ENCODE measurements at regions of chr3 and their contacts with region 1.

Region 1: DNA sequence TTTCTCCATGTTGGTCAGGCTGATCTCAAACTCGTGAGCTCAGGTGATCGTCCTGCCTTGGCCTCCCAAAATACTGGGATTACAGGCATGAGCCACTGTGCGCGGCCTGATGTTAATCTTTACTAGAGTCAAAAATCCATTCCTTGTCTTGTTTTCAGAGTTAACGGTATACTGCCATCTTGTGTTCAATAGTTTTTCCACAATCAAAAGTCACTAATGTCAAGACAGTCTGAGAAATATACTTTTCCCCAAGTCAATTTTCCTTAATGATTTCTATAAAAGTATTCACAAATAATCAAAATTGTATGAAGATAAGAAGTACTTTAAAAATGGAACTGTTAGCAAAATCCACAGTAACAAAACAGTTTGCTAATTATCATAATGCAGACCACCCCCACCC is 8.5 kb downstream of the CRBN start:
- DNase-seq: peak; percentile 46 to 55 (median 50)
- H3K4me3 ChIP-seq: no peak overlapping the region
- H3K4me3 Mint-ChIP-seq: peak overlapping the region in 6 of 8 donors; percentile 35 to 95 (median 58)
- H3K27ac ChIP-seq: peak overlapping the region; percentile 72
- H3K27ac Mint-ChIP-seq: peak overlapping the region; percentile 86 to 98 (median 97)
- H3K4me1 ChIP-seq: peaks cover 81% of the 10 kb centered on the region
- H3K4me1 Mint-ChIP-seq: peaks cover 47 to 86% (median 64%) of the 10 kb centered on the region in 4 donors
- H3K27me3 ChIP-seq: no peaks in the 10 kb centered on the region
- H3K27me3 Mint-ChIP-seq: no peaks in the 10 kb centered on the region

Region 2: DNA sequence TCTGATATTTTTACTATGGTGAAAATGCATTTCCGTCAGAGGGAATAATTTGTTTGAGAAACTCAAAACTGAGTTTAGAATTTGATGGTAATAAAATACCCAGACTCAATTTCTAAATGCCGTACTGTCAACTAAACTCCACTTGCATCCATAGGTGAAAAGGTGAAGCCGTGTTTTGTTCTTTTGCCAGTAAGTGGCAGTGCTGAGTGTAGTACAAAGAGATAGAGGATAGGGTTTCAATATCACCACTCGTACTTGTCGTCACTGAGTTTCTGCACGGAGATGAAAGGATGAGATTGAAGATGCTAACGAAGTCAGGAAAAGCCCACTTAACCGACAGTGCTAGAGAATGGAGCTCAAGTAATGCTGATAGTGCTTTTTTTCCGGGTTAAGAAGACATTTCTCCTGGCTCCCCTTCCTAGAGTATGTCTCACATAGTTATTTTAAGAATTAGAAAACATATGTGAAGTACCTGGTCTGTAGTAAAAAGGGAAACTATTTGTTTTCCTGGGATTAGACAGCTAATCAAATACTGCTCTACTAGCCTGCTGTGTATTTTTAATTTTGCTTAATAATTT is 405.9 kb before region 1 on chr3:
- CTCF ChIA-PET with region 1: interaction called, 3 read pairs
- POLR2A ChIA-PET with region 1: no interaction called
- intact Hi-C with region 1: loop called (anchors 1 kb)
- DNase-seq: peak in 3 of 5 donors; percentile 12 to 20 (median 17)
- H3K4me3 ChIP-seq: no peak overlapping the region
- H3K4me3 Mint-ChIP-seq: peak overlapping the region in 2 of 8 donors; percentile 4 to 39
- H3K27ac ChIP-seq: no peak overlapping the region
- H3K27ac Mint-ChIP-seq: no peak overlapping the region
- H3K4me1 ChIP-seq: no peaks in the 10 kb centered on the region
- H3K4me1 Mint-ChIP-seq: peaks cover 0 to 4% (median 3%) of the 10 kb centered on the region in 4 donors
- H3K27me3 ChIP-seq: no peaks in the 10 kb centered on the region
- H3K27me3 Mint-ChIP-seq: peaks cover 3 to 4% of the 10 kb centered on the region in 2 donors

Region 3: DNA sequence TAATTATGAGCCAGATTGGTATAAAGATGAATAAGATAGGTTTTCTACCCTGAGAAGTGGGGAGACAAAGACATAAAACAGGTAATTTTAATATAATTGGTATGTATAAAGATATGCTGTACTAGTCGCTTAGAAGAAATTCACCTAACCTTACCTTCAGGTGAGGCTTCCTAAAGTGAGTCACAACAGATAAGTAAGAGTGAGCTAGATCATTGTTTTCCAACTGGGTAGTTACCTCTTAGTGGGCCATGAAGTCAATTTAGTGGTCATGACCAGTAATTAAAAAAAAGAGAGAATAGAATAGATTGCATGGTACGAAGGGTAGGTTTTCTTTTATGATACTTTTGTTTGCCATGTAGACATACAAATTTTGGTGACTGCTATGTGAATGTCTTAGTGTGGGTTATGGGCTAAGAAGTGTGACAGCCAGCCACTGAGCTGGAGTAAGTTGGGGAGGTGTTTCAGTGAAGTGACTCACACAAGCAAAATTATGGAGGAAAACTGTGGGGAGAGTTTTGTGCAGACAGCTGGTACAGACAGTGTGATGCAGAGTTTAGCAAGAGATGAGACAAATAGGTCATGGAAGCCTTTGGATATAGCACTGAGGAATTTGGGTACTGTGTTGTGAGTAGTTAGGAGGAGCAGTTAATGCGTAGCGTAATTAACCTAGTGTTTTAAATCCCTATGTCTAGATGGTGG is 36.1 kb before region 1 on chr3:
- CTCF ChIA-PET with region 1: interaction called, 14 read pairs
- POLR2A ChIA-PET with region 1: interaction called, 5 read pairs
- intact Hi-C with region 1: no loop called
- DNase-seq: no peak
- H3K4me3 ChIP-seq: no peak overlapping the region
- H3K4me3 Mint-ChIP-seq: peak overlapping the region in 4 of 8 donors; percentile 7 to 35 (median 18)
- H3K27ac ChIP-seq: no peak overlapping the region
- H3K27ac Mint-ChIP-seq: peak overlapping the region; percentile 56 to 87 (median 76)
- H3K4me1 ChIP-seq: peaks cover 41% of the 10 kb centered on the region
- H3K4me1 Mint-ChIP-seq: peaks cover 39 to 64% (median 51%) of the 10 kb centered on the region in 4 donors
- H3K27me3 ChIP-seq: no peaks in the 10 kb centered on the region
- H3K27me3 Mint-ChIP-seq: no peaks in the 10 kb centered on the region

Region 4: GRCh38 chr3:3154879-3155610 is 16.0 kb before region 1 on chr3:
- CTCF ChIA-PET with region 1: interaction called, 20 read pairs
- POLR2A ChIA-PET with region 1: interaction called, 15 read pairs
- intact Hi-C with region 1: no loop called
- DNase-seq: no peak
- H3K4me3 ChIP-seq: no peak overlapping the region
- H3K4me3 Mint-ChIP-seq: no peak overlapping the region
- H3K27ac ChIP-seq: peak overlapping the region; percentile 22
- H3K27ac Mint-ChIP-seq: peak overlapping the region in 6 of 7 donors; percentile 39 to 87 (median 76)
- H3K4me1 ChIP-seq: peaks cover 19% of the 10 kb centered on the region
- H3K4me1 Mint-ChIP-seq: peaks cover 33 to 66% (median 46%) of the 10 kb centered on the region in 4 donors
- H3K27me3 ChIP-seq: no peaks in the 10 kb centered on the region
- H3K27me3 Mint-ChIP-seq: no peaks in the 10 kb centered on the region

Region 5: GRCh38 chr3:3160826-3161225 is 10.2 kb before region 1 on chr3:
- CTCF ChIA-PET with region 1: interaction called, 7 read pairs
- POLR2A ChIA-PET with region 1: interaction called, 15 read pairs
- intact Hi-C with region 1: no loop called
- DNase-seq: no peak
- H3K4me3 ChIP-seq: no peak overlapping the region
- H3K4me3 Mint-ChIP-seq: peak overlapping the region in 1 of 8 donors; percentile 5
- H3K27ac ChIP-seq: no peak overlapping the region
- H3K27ac Mint-ChIP-seq: peak overlapping the region; percentile 11 to 86 (median 67)
- H3K4me1 ChIP-seq: peaks cover 34% of the 10 kb centered on the region
- H3K4me1 Mint-ChIP-seq: peaks cover 44 to 80% (median 63%) of the 10 kb centered on the region in 4 donors
- H3K27me3 ChIP-seq: no peaks in the 10 kb centered on the region
- H3K27me3 Mint-ChIP-seq: no peaks in the 10 kb centered on the region

Region 6: DNA sequence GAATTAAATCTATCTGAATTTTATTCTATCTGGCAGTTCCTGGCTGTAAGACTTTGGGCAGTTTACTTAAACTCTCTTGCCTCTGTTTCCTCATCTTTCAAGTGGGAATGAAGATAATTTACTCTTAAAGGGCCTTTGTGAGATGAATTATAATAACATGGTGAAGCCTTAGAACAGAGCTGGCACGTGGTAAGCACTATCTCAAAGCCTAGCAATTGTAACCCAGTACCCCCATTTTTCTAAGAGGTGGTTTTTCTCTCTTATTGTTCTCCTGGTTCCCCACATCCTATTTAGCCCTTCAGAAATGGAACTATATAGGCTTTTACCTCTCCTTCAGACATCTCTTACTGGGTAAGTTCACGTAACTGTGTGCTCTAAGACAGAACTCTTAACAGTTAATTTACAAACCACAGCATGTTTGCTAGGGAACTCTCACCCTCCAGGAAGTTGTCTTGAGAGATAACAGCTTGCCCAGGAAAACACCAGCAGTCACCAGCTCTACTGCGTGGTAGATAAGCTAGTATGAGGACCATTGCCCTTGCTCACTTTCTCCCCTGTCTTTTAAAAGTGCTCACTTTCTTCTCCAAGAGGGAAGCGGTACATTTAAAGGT is 20.8 kb after region 1 on chr3:
- CTCF ChIA-PET with region 1: interaction called, 61 read pairs
- POLR2A ChIA-PET with region 1: interaction called, 26 read pairs
- intact Hi-C with region 1: no loop called
- DNase-seq: peak; percentile 36 to 54 (median 50)
- H3K4me3 ChIP-seq: peak overlapping the region; percentile 18 to 44
- H3K4me3 Mint-ChIP-seq: peak overlapping the region; percentile 36 to 86 (median 78)
- H3K27ac ChIP-seq: peak overlapping the region; percentile 49
- H3K27ac Mint-ChIP-seq: peak overlapping the region; percentile 83 to 93 (median 89)
- H3K4me1 ChIP-seq: peaks cover 47% of the 10 kb centered on the region
- H3K4me1 Mint-ChIP-seq: peaks cover 43 to 75% (median 59%) of the 10 kb centered on the region in 4 donors
- H3K27me3 ChIP-seq: no peaks in the 10 kb centered on the region
- H3K27me3 Mint-ChIP-seq: no peaks in the 10 kb centered on the region

Region 7: GRCh38 chr3:3200632-3201212 is 29.7 kb after region 1 on chr3:
- CTCF ChIA-PET with region 1: interaction called, 27 read pairs
- POLR2A ChIA-PET with region 1: no interaction called
- intact Hi-C with region 1: no loop called
- DNase-seq: peak in 1 of 5 donors; percentile 33
- H3K4me3 ChIP-seq: no peak overlapping the region
- H3K4me3 Mint-ChIP-seq: peak overlapping the region in 7 of 8 donors; percentile 10 to 74 (median 55)
- H3K27ac ChIP-seq: no peak overlapping the region
- H3K27ac Mint-ChIP-seq: peak overlapping the region in 3 of 7 donors; percentile 2 to 63 (median 4)
- H3K4me1 ChIP-seq: peaks cover 12% of the 10 kb centered on the region
- H3K4me1 Mint-ChIP-seq: peaks cover 16 to 32% (median 24%) of the 10 kb centered on the region in 4 donors
- H3K27me3 ChIP-seq: no peaks in the 10 kb centered on the region
- H3K27me3 Mint-ChIP-seq: peaks cover 0 to 2% of the 10 kb centered on the region in 2 donors

Measured in CD4-positive, alpha-beta memory T cell (primary cell).